HEK293T (cell line): ENCODE measurements at regions of chr1 and their contacts with region 1.

Region 1: GRCh38 chr1:17744666-17745478 is 10.3 kb upstream of the ACTL8 start:
- DNase-seq: no peak

Region 2: DNA sequence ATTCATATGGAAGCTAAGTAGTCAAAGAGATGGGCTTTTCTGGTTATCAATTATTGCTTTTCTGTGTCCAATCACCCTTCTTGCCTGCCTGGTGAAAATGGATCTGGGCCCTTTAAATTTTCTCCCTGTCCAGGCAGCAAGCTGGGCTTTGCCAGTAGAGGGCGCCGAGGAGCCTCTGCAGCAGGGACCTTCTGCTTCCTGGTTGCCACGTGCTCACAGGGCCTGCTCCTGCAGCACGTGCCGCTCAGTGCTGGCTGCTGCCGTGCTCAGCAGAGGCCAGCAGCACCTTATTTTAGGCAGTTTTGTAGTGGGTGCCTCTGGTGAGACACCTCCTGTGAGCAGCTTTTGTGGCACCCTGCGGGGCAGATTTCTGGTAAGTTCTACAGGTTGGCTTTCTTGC is 14.2 kb after region 1 on chr1:
- CTCF ChIA-PET with region 1: no interaction called
- POLR2A ChIA-PET with region 1: no interaction called
- DNase-seq: peak; percentile 40

Region 3: DNA sequence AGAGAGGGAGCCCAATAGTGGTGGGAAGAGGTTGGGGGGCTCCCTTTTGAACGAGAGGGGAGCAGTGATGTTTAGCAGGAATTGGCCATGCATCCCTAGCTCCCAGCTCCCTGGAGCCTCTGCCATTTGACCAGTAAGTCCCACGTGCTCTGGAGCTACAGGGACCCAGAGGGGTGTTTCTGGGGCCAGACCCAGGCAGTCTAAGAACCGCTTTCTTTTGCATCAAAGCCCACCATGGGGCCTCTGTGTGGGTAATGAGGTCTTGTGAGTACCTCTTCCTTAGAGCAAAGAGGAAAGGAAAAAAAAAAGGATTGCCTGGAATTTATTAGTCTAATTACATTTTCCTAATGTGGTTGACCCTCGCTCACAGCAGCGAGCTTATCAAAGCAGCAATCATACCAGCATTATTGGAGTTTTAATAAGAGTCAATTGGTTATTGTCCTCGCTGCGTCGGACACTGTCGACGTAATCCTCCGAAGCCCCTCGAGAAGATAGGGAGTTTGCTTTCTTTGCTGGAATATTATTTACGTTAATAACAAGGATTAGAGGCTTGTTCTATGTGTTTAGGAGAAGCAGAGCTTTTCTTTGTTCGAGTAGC is 27.8 kb after region 1 on chr1:
- CTCF ChIA-PET with region 1: interaction called, 10 read pairs
- POLR2A ChIA-PET with region 1: no interaction called
- DNase-seq: no peak